PC-9 (cell line): ENCODE measurements at regions of chr2 and their contacts with region 1.

Region 1: GRCh38 chr2:158573739-158574138 is 117.0 kb downstream of the PKP4 start:
- DNase-seq: no peak
- H3K4me3 ChIP-seq: no peak overlapping the region
- H3K27ac ChIP-seq: no peak overlapping the region
- H3K4me1 ChIP-seq: no peaks in the 10 kb centered on the region
- H3K27me3 ChIP-seq: no peaks in the 10 kb centered on the region
- CTCF ChIP-seq: no peak

Region 2: DNA sequence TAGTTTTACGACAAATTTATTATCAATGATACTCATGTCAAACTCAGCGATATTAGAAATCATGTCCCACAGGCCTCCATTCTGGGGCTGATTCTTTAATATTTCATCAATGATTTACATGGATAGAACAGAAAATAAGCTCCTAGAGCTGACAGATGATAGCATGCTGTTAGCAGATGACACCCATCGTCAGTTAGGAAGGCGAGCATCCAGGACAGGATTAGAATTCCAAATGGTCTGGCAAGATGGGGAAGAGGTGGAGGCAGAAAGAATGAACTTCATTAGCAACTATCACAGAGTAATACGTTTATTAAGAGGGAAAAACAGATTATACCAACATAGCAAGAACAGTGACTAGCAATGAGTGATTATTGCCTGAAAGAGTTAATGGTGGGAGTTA is 651.4 kb before region 1 on chr2:
- CTCF ChIA-PET with region 1: no interaction called
- POLR2A ChIA-PET with region 1: interaction called, 13 read pairs
- intact Hi-C with region 1: no loop called
- DNase-seq: no peak
- H3K4me3 ChIP-seq: no peak overlapping the region
- H3K27ac ChIP-seq: no peak overlapping the region
- H3K4me1 ChIP-seq: no peaks in the 10 kb centered on the region
- H3K27me3 ChIP-seq: no peaks in the 10 kb centered on the region
- CTCF ChIP-seq: no peak

Region 3: DNA sequence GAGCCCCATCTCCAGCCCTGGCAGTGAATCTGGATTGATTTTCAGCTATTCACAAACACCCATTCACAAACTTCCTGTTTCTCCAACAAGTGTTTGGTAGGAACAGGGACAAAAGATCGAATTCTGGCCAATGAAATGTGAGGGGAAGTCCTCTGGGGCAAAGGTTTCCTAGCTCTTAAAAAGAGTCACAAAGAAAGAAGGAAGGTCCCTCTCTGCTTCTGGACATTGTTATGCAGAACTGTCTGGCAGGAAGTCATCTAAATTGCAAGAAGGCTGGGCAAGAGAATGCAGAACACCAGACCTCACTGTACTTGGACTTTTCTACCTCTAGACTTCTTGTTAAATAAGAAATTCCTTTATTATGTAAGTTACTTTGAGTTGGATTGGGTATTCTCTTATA is 254.5 kb before region 1 on chr2:
- CTCF ChIA-PET with region 1: no interaction called
- POLR2A ChIA-PET with region 1: interaction called, 11 read pairs
- intact Hi-C with region 1: no loop called
- DNase-seq: no peak
- H3K4me3 ChIP-seq: no peak overlapping the region
- H3K27ac ChIP-seq: no peak overlapping the region
- H3K4me1 ChIP-seq: no peaks in the 10 kb centered on the region
- H3K27me3 ChIP-seq: no peaks in the 10 kb centered on the region
- CTCF ChIP-seq: no peak